ENCODE measurements at regions of chr20 and their contacts with region 1.

Region 1: DNA sequence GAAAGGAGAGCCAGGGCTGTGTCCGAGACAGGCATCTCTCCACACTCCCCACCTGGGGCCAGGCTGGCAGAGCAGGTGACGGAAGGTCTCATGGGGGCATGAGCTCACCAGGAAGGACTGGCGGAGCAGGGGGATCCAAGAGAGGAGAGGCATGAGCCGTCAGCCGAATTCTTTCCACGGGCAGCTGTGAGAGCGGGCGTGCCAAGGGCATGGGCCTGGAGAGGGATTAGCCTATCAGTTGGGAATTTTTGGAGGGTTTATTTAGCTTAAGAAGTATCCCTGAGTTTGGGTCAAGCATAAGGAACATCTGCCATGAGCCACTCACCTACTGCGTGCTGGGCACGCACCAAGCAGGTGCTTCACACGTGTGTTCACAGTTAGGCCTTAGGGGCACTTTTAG is 60.2 kb upstream of the ZNFX1 start:
- DNase-seq: no peak
- ATAC-seq: no peak
- H3K4me3 ChIP-seq: no peak overlapping the region
- H3K27ac ChIP-seq: peak overlapping the region in 3 of 4 donors; percentile 29 to 68 (median 63)
- H3K4me1 ChIP-seq: peaks cover 10 to 24% of the 10 kb centered on the region in 2 donors
- H3K27me3 ChIP-seq: no peaks in the 10 kb centered on the region
- CTCF ChIP-seq: no peak
- POLR2A ChIP-seq: no peak

Region 2: GRCh38 chr20:49384437-49385088 is 46.5 kb after region 1 on chr20:
- in situ Hi-C with region 1: no loop called
- intact Hi-C with region 1: loop called (anchors 2 kb)
- DNase-seq: peak in 1 of 2 donors; percentile 42
- ATAC-seq: no peak
- H3K4me3 ChIP-seq: no peak overlapping the region
- H3K27ac ChIP-seq: peak overlapping the region in 1 of 4 donors; percentile 83
- H3K4me1 ChIP-seq: peaks cover 30 to 65% of the 10 kb centered on the region in 2 donors
- H3K27me3 ChIP-seq: no peaks in the 10 kb centered on the region
- CTCF ChIP-seq: peak; percentile 43 to 64 (median 54)
- POLR2A ChIP-seq: no peak

Region 3: GRCh38 chr20:49508435-49509199 is 170.6 kb after region 1 on chr20:
- in situ Hi-C with region 1: no loop called
- intact Hi-C with region 1: loop called (anchors 1 kb)
- DNase-seq: no peak
- ATAC-seq: peak; percentile 33 to 51
- H3K4me3 ChIP-seq: peak overlapping the region in 1 of 4 donors; percentile 21
- H3K27ac ChIP-seq: peak overlapping the region; percentile 4 to 82 (median 77)
- H3K4me1 ChIP-seq: peaks cover 34 to 41% of the 10 kb centered on the region in 2 donors
- H3K27me3 ChIP-seq: no peaks in the 10 kb centered on the region
- CTCF ChIP-seq: peak; percentile 44 to 66 (median 53)
- POLR2A ChIP-seq: no peak